HepG2 (cell line): ENCODE measurements at regions of chr1 and their contacts with region 1.

Region 1: GRCh38 chr1:96688767-96689166 is 32.8 kb upstream of the PTBP2 start:
- DNase-seq: peak; percentile 29
- ATAC-seq: peak; percentile 87
- H3K4me3 ChIP-seq: no peak overlapping the region
- H3K27ac ChIP-seq: no peak overlapping the region
- H3K4me1 ChIP-seq: 0 out of 2 replicates have a peak, but pooled peaks cover 5% of the 10 kb centered on the region
- H3K27me3 ChIP-seq: no peaks in the 10 kb centered on the region
- CTCF ChIP-seq: peak; percentile 73
- EP300 ChIP-seq: no peak
- POLR2A ChIP-seq: no peak
- RAD21 ChIP-seq: 0 out of 2 replicates have a peak, but pooled peaks have one; percentile 30

Region 2: GRCh38 chr1:95770581-95770980 is 918.2 kb before region 1 on chr1:
- CTCF ChIA-PET with region 1: no interaction called
- POLR2A ChIA-PET with region 1: no interaction called
- in situ Hi-C with region 1: no loop called
- intact Hi-C with region 1: no loop called
- DNase-seq: no peak
- ATAC-seq: no peak
- H3K4me3 ChIP-seq: no peak overlapping the region
- H3K27ac ChIP-seq: no peak overlapping the region
- H3K4me1 ChIP-seq: no peaks in the 10 kb centered on the region
- H3K27me3 ChIP-seq: no peaks in the 10 kb centered on the region
- CTCF ChIP-seq: no peak
- EP300 ChIP-seq: no peak
- POLR2A ChIP-seq: no peak
- RAD21 ChIP-seq: no peak

Region 3: DNA sequence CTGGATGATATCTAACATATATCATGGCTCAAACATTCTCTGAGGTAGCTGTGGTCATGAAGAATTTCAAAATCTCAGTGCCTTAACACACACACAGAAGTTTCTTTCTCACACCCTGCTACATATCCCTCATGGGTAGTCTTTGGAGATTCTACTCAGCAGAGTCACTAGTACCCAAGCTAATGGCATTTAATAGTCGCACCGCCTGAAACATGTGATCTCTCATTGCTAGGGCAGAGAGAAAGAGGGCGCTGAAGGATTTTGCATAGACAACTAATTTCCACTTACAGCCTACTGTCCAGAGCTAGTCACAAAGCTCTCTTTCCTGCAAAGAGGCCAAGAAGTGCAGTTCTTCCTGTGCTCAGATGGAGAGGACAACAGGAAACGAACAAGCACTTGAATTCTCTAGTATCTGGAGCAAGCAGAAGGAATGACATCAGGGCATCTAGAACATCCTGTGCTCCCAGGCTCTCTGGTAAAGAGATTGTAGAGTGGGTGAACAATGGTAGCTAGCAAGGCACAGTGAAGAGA is 150.6 kb before region 1 on chr1:
- CTCF ChIA-PET with region 1: no interaction called
- POLR2A ChIA-PET with region 1: no interaction called
- in situ Hi-C with region 1: no loop called
- intact Hi-C with region 1: loop called (anchors 10 kb)
- DNase-seq: peak; percentile 31
- ATAC-seq: peak; percentile 96
- H3K4me3 ChIP-seq: no peak overlapping the region
- H3K27ac ChIP-seq: no peak overlapping the region
- H3K4me1 ChIP-seq: no peaks in the 10 kb centered on the region
- H3K27me3 ChIP-seq: 0 out of 5 replicates have a peak, but pooled peaks cover 0 to 3% of the 10 kb centered on the region in 2 experiments
- CTCF ChIP-seq: peak; percentile 69
- EP300 ChIP-seq: no peak
- POLR2A ChIP-seq: no peak
- RAD21 ChIP-seq: no peak

Region 4: DNA sequence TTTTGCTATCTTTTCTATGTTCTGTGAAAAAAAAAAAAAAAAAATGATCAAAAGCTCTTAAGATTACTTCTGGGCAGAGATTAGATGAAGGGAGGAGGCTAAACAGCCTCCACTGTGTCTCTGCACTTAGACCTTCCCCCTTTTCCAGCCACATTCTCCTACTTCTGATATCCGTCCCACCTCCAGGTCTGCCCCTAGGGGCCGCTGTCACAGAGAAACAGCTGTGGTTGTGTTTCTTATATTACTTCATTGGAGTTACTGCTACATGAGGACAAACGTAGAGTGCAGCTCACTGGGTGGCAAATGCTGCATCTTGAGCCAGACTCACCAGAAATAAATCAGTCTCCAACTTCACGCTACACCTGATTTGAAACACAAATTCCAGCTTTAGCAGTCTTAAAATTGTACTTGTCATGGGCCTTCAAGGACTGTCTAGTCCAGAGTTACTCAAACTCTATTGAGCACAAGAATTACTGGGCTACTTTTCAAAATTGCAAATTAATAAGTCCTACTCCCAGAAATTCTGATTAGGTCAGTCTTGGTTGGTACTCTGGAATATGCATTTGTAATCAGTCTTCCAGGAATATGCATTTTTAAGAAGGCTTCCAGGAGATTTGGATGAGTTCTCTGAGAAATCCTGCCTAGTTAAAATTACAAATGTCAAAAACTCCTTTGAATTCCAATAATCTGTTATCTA is 92.4 kb before region 1 on chr1:
- CTCF ChIA-PET with region 1: no interaction called
- POLR2A ChIA-PET with region 1: no interaction called
- in situ Hi-C with region 1: no loop called
- intact Hi-C with region 1: loop called (anchors 1 kb)
- DNase-seq: peak; percentile 63
- ATAC-seq: peak; percentile 99
- H3K4me3 ChIP-seq: no peak overlapping the region
- H3K27ac ChIP-seq: no peak overlapping the region
- H3K4me1 ChIP-seq: no peaks in the 10 kb centered on the region
- H3K27me3 ChIP-seq: no peaks in the 10 kb centered on the region
- CTCF ChIP-seq: peak; percentile 81
- EP300 ChIP-seq: no peak
- POLR2A ChIP-seq: no peak
- RAD21 ChIP-seq: peak; percentile 20; the same call in 1 of the 2 replicates